ENCODE measurements at regions of chr12 and their contacts with region 1.

Region 1: DNA sequence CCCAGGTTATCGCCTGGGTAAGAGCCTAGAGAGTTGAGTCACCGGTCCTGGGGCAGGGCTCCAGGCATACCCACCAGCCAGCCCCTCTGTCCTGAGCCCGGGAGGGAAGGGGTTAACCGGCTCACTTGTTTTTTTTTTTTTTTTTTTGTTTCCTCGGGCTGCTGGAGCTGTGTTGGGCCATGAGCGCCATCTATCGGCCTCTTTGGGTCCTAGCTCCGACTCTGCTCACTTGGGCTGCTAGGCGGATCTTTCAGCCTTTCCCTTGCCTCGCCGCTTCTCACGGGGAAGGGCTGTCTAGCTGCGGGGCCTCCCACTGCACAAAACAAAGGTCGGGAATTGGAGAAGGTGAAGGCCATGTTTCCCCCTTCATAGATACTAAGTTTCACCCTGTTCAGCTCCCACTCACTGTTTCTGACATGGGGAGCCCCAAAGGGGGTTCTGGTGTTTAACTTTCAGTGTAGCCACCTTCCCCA is 2.8 kb upstream of the SMUG1 start:
- DNase-seq: no peak
- ATAC-seq: peak; percentile 70
- H3K4me3 ChIP-seq: no peak overlapping the region
- H3K27ac ChIP-seq: no peak overlapping the region
- H3K4me1 ChIP-seq: peaks cover 10% of the 10 kb centered on the region
- H3K27me3 ChIP-seq: peaks cover 2 to 3% of the 10 kb centered on the region in 2 experiments; a peak in 1 of 4 replicates
- CTCF ChIP-seq: peak; percentile 86 to 94 (median 88)
- EP300 ChIP-seq: no peak; a peak in 1 of 4 replicates
- POLR2A ChIP-seq: no peak
- RAD21 ChIP-seq: peak; percentile 92

Region 2: DNA sequence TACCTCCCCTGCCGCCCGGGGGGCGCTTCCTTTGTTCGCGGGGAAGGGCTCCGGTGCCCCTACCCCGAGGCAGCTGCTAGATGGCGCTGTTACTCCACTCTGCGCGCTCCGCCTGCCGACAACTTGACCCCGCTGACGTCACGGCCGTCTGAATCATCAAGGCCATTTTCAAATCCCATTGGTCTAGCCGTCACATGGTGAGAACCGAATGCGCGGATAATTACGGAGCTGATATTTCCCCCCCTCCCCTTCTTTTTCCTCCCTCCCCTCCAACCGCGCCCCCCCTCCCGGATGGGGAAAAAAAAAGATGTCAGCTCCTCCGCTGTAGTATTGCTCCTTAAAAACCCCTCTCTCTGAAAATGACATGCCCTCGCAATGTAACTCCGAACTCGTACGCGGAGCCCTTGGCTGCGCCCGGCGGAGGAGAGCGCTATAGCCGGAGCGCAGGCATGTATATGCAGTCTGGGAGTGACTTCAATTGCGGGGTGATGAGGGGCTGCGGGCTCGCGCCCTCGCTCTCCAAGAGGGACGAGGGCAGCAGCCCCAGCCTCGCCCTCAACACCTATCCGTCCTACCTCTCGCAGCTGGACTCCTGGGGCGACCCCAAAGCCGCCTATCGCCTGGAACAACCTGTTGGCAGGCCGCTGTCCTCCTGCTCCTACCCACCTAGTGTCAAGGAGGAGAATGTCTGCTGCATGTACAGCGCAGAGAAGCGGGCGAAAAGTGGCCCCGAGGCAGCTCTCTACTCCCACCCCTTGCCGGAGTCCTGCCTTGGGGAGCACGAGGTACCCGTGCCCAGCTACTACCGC is 206.5 kb before region 1 on chr12 and contains the start of gene HOXC10:
- CTCF ChIA-PET with region 1: interaction called, 13 read pairs
- POLR2A ChIA-PET with region 1: no interaction called
- RAD21 ChIA-PET with region 1: interaction called, 4 read pairs
- SMC1A ChIA-PET with region 1: interaction called, 3 read pairs
- in situ Hi-C with region 1: no loop called
- intact Hi-C with region 1: no loop called
- DNase-seq: peak; percentile 38
- ATAC-seq: peak; percentile 80
- H3K4me3 ChIP-seq: peak within 1 kb of the TSS; percentile 44; the same call in 1 of the 2 replicates
- H3K27ac ChIP-seq: no peak within 1 kb of the TSS
- H3K4me1 ChIP-seq: peaks cover 24% of the 10 kb centered on the region
- H3K27me3 ChIP-seq: peaks cover 30 to 50% of the 10 kb centered on the region in 2 experiments
- CTCF ChIP-seq: peak; percentile 67 to 93 (median 86)
- EP300 ChIP-seq: no peak
- POLR2A ChIP-seq: no peak
- RAD21 ChIP-seq: peak; percentile 77
- polyA plus RNA-seq, gene HOXC10: not detected

Region 3: GRCh38 chr12:54017878-54018467 is 173.6 kb before region 1 on chr12:
- CTCF ChIA-PET with region 1: interaction called, 343 read pairs
- POLR2A ChIA-PET with region 1: interaction called, 11 read pairs
- RAD21 ChIA-PET with region 1: interaction called, 21 read pairs
- SMC1A ChIA-PET with region 1: interaction called, 22 read pairs
- in situ Hi-C with region 1: loop called (anchors 10 kb)
- intact Hi-C with region 1: no loop called
- DNase-seq: peak; percentile 79
- ATAC-seq: peak; percentile 92
- H3K4me3 ChIP-seq: peak overlapping the region; percentile 88
- H3K27ac ChIP-seq: peak overlapping the region; percentile 80
- H3K4me1 ChIP-seq: peaks cover 21% of the 10 kb centered on the region
- H3K27me3 ChIP-seq: peaks cover 8 to 26% of the 10 kb centered on the region in 2 experiments
- CTCF ChIP-seq: no peak
- EP300 ChIP-seq: peak; percentile 36 to 45; a peak in 1 of 4 replicates
- POLR2A ChIP-seq: peak; percentile 79
- RAD21 ChIP-seq: no peak

Region 4: GRCh38 chr12:54053751-54054741 is 137.5 kb before region 1 on chr12 and contains the start of gene HOXC4:
- CTCF ChIA-PET with region 1: interaction called, 57 read pairs
- POLR2A ChIA-PET with region 1: interaction called, 17 read pairs
- RAD21 ChIA-PET with region 1: interaction called, 29 read pairs
- SMC1A ChIA-PET with region 1: interaction called, 37 read pairs
- in situ Hi-C with region 1: no loop called
- intact Hi-C with region 1: no loop called
- DNase-seq: no peak
- ATAC-seq: peak; percentile 86
- H3K4me3 ChIP-seq: peak within 1 kb of the TSS; percentile 84
- H3K27ac ChIP-seq: peak within 1 kb of the TSS; percentile 89
- H3K4me1 ChIP-seq: peaks cover 22% of the 10 kb centered on the region
- H3K27me3 ChIP-seq: no peaks in the 10 kb centered on the region
- CTCF ChIP-seq: no peak
- EP300 ChIP-seq: no peak
- POLR2A ChIP-seq: no peak; the same call in 1 of the 2 replicates
- RAD21 ChIP-seq: no peak
- polyA plus RNA-seq, gene HOXC4: 1.0 to 1.8 TPM

Region 5: DNA sequence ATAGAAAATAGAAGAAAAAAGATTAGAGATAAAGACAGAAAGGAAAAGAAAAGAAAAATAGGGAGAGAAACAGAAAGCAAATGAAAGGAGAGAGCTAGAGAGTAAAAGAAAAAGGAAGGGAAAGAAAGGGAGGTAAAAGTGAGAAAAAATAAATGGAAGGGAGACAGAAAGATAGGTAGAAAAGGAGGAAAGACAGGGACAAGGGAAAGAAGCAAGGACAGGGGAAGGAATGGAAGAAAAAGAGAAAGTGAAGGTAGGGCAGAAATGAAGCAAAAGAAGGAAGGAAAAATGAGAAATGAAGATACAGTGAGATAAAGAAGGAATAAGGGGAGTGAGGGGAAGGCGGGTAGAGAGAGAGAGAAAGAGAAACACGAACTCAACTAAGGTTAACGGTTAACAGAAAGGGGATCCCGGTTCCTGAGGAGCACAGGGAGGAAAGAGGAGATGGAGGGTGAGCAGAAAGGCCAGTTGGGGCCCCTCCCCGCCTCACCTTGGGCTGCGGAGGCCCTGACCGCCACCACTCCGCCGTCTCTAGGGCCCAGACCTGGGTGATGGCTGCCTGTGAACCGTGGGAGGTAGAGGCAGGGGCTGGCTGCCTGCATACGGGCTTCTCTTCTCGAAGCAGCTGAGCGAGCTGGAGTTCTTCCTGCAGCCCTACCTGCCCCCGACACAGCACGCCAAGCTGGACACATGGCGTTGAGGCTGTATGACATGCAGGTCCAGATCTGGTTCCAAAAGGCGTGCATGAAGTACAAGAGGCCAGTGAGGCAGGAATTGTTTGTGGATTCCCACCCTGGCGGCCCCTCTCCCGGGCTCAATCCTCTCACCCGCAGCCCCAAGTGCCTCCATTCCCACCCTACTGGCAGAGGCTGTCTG is 62.3 kb before region 1 on chr12:
- CTCF ChIA-PET with region 1: no interaction called
- POLR2A ChIA-PET with region 1: no interaction called
- RAD21 ChIA-PET with region 1: no interaction called
- SMC1A ChIA-PET with region 1: no interaction called
- in situ Hi-C with region 1: no loop called
- intact Hi-C with region 1: no loop called
- DNase-seq: no peak
- ATAC-seq: no peak
- H3K4me3 ChIP-seq: no peak overlapping the region
- H3K27ac ChIP-seq: no peak overlapping the region
- H3K4me1 ChIP-seq: no peaks in the 10 kb centered on the region
- H3K27me3 ChIP-seq: peaks cover 8 to 16% of the 10 kb centered on the region in 2 experiments
- CTCF ChIP-seq: no peak
- EP300 ChIP-seq: no peak
- POLR2A ChIP-seq: no peak
- RAD21 ChIP-seq: no peak

Region 6: DNA sequence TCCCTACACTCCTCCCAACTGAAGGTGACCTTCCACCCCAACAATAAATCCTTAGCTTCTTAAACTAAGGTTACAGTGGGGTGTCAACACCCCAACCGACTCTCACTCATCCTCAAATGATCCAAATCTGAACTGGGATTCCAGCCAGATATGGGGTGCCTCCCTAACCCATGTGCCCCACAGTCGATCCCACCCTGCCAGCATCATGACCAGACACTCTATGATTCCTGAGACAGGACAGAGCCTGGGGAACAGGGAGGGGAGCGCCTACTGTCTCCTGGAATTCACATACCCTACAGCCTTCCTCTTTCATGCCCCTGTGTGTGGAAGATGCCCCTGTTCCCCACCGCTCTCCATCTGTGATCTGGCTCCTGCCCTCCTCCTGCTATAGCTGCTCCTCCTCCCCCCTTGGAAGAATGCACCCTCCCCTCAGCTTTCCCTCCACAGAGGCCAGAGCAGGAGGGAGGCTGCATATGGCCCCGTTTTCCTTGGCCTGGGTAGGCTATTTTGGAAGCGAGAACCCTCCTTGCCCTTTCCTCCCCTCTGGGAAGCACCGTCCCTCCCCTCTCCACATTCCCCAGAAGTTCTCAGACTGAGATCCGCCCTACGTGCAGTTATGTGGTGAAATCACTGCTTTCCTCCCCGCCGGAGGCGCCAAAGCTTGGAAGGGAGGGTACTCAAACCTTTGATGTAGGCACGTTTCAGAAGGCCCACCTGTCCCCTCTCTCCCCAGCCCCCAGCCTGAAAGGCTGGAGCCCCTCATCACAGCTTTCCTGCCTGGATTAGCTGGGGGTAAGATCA is 50.8 kb before region 1 on chr12:
- CTCF ChIA-PET with region 1: interaction called, 20 read pairs
- POLR2A ChIA-PET with region 1: interaction called, 8 read pairs
- RAD21 ChIA-PET with region 1: interaction called, 30 read pairs
- SMC1A ChIA-PET with region 1: interaction called, 27 read pairs
- in situ Hi-C with region 1: no loop called
- intact Hi-C with region 1: no loop called
- DNase-seq: no peak
- ATAC-seq: no peak
- H3K4me3 ChIP-seq: no peak overlapping the region
- H3K27ac ChIP-seq: no peak overlapping the region
- H3K4me1 ChIP-seq: no peaks in the 10 kb centered on the region
- H3K27me3 ChIP-seq: peaks cover 5 to 7% of the 10 kb centered on the region in 2 experiments
- CTCF ChIP-seq: no peak
- EP300 ChIP-seq: no peak
- POLR2A ChIP-seq: no peak
- RAD21 ChIP-seq: no peak

Region 7: GRCh38 chr12:54207484-54208294 is 16.1 kb after region 1 on chr12:
- CTCF ChIA-PET with region 1: interaction called, 113 read pairs
- POLR2A ChIA-PET with region 1: interaction called, 4 read pairs
- RAD21 ChIA-PET with region 1: interaction called, 36 read pairs
- SMC1A ChIA-PET with region 1: interaction called, 23 read pairs
- in situ Hi-C with region 1: no loop called
- intact Hi-C with region 1: no loop called
- DNase-seq: no peak
- ATAC-seq: peak; percentile 98
- H3K4me3 ChIP-seq: no peak overlapping the region
- H3K27ac ChIP-seq: no peak overlapping the region
- H3K4me1 ChIP-seq: no peaks in the 10 kb centered on the region
- H3K27me3 ChIP-seq: peaks cover 0 to 2% of the 10 kb centered on the region in 2 experiments; a peak in 3 of 4 replicates
- CTCF ChIP-seq: peak; percentile 93 to 97 (median 97)
- EP300 ChIP-seq: no peak
- POLR2A ChIP-seq: no peak
- RAD21 ChIP-seq: peak; percentile 87

Region 8: GRCh38 chr12:54497883-54498282 is 306.3 kb after region 1 on chr12:
- CTCF ChIA-PET with region 1: no interaction called
- POLR2A ChIA-PET with region 1: no interaction called
- RAD21 ChIA-PET with region 1: no interaction called
- SMC1A ChIA-PET with region 1: no interaction called
- in situ Hi-C with region 1: no loop called
- intact Hi-C with region 1: no loop called
- DNase-seq: no peak
- ATAC-seq: peak; percentile 3
- H3K4me3 ChIP-seq: peak overlapping the region; percentile 82
- H3K27ac ChIP-seq: peak overlapping the region; percentile 91
- H3K4me1 ChIP-seq: peaks cover 3% of the 10 kb centered on the region; the same call in 1 of the 2 replicates
- H3K27me3 ChIP-seq: no peaks in the 10 kb centered on the region
- CTCF ChIP-seq: no peak
- EP300 ChIP-seq: no peak
- POLR2A ChIP-seq: no peak
- RAD21 ChIP-seq: no peak

Measured in GM12878 (cell line).